Mammary epithelial cell (primary cell): ENCODE measurements at regions of chr1 and their contacts with region 1.

Region 1: GRCh38 chr1:200971955-200972711 is 51.4 kb downstream of the KIF21B start:
- DNase-seq: peak; percentile 6
- H3K4me3 ChIP-seq: no peak overlapping the region
- H3K27ac ChIP-seq: no peak overlapping the region
- H3K4me1 ChIP-seq: no peaks in the 10 kb centered on the region
- H3K27me3 ChIP-seq: no peaks in the 10 kb centered on the region
- CTCF ChIP-seq: peak; percentile 37 to 70

Region 2: DNA sequence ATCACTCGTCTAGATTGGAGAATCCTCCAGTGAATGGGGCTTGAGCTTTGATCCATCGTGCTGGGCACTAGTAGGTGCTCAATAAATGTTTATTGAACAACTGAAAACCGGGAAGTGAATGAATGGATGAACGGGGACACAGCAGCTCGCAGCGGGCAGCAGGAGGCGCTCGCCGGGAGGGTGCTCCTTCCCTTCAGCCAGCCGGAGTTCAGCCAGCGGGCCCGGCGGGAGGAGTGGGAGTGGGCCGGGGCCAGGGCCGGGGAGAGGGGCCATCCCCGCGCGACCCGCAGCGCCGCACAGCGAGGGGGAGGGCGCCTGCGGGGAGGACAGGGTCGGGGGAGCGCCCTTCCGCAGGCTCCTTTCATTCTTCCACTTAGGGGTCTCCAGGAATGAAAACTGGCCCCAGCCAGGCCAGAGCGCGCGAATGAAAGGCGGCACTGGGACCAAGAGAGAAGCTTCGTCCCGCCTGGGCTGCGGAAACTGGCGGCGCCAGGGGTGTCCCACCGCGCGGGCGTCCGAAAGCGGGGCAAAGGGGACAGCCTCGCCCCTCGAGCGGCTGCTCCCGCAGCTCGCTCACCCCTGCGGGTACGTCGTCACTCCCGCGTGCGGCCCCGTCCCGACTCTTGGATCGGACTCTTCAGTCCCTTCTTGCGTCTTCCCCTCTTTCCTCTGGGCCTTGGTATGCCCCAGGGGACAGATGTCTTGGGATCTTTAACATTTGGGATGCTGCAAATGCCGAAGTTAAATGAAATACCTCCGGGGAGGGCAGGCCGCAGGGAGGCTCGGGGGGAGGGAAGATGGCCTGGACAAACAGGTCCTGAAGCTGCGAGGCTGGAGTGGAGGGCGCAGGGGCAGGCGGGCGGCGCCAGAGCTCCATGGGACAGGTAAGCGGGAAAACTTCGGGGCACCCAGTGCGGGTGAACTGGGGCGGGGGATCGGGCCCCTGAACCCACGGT is 81.0 kb before region 1 on chr1:
- CTCF ChIA-PET with region 1: no interaction called
- dilution Hi-C with region 1: no loop called
- in situ Hi-C with region 1: no loop called
- intact Hi-C with region 1: loop called (anchors 2 kb)
- DNase-seq: peak; percentile 65
- H3K4me3 ChIP-seq: peak overlapping the region; percentile 38 to 60 (median 56)
- H3K27ac ChIP-seq: peak overlapping the region; percentile 55
- H3K4me1 ChIP-seq: peaks cover 51% of the 10 kb centered on the region
- H3K27me3 ChIP-seq: no peaks in the 10 kb centered on the region
- CTCF ChIP-seq: peak; percentile 32 to 63